ENCODE measurements at regions of chr17 and their contacts with region 1.

Region 1: GRCh38 chr17:34024806-34025551 is 230.1 kb upstream of the CCL2 start:
- DNase-seq: no peak
- ATAC-seq: peak in 1 of 2 donors; percentile 30
- H3K4me3 ChIP-seq: no peak overlapping the region
- H3K27ac ChIP-seq: no peak overlapping the region
- H3K4me1 ChIP-seq: no peaks in the 10 kb centered on the region
- H3K27me3 ChIP-seq: no peaks in the 10 kb centered on the region
- CTCF ChIP-seq: no peak
- POLR2A ChIP-seq: no peak

Region 2: GRCh38 chr17:33905338-33905800 is 119.6 kb before region 1 on chr17:
- in situ Hi-C with region 1: no loop called
- intact Hi-C with region 1: no loop called
- DNase-seq: no peak
- ATAC-seq: no peak
- H3K4me3 ChIP-seq: no peak overlapping the region
- H3K27ac ChIP-seq: no peak overlapping the region
- H3K4me1 ChIP-seq: no peaks in the 10 kb centered on the region
- H3K27me3 ChIP-seq: no peaks in the 10 kb centered on the region
- CTCF ChIP-seq: no peak
- POLR2A ChIP-seq: no peak

Region 3: GRCh38 chr17:34110315-34110714 is 85.3 kb after region 1 on chr17:
- in situ Hi-C with region 1: loop called in 1 of 4 experiments (anchors 25 kb)
- intact Hi-C with region 1: no loop called
- DNase-seq: no peak
- ATAC-seq: no peak
- H3K4me3 ChIP-seq: no peak overlapping the region
- H3K27ac ChIP-seq: no peak overlapping the region
- H3K4me1 ChIP-seq: no peaks in the 10 kb centered on the region
- H3K27me3 ChIP-seq: peaks cover 0 to 9% (median 0%) of the 10 kb centered on the region in 3 donors
- CTCF ChIP-seq: no peak
- POLR2A ChIP-seq: no peak

Region 4: GRCh38 chr17:34269969-34270368 is 245.0 kb after region 1 on chr17 and contains the start of gene CCL7:
- in situ Hi-C with region 1: no loop called
- intact Hi-C with region 1: no loop called
- DNase-seq: no peak
- ATAC-seq: no peak
- H3K4me3 ChIP-seq: no peak within 1 kb of the TSS
- H3K27ac ChIP-seq: no peak within 1 kb of the TSS
- H3K4me1 ChIP-seq: no peaks in the 10 kb centered on the region
- H3K27me3 ChIP-seq: no peaks in the 10 kb centered on the region
- CTCF ChIP-seq: no peak
- POLR2A ChIP-seq: no peak
- total RNA-seq, gene CCL7: not detected

Region 5: GRCh38 chr17:34930283-34930682 is 905.3 kb after region 1 on chr17:
- in situ Hi-C with region 1: no loop called
- intact Hi-C with region 1: no loop called
- DNase-seq: no peak
- ATAC-seq: no peak
- H3K4me3 ChIP-seq: no peak overlapping the region
- H3K27ac ChIP-seq: no peak overlapping the region
- H3K4me1 ChIP-seq: no peaks in the 10 kb centered on the region
- H3K27me3 ChIP-seq: no peaks in the 10 kb centered on the region
- CTCF ChIP-seq: no peak
- POLR2A ChIP-seq: no peak

Measured in gastrocnemius medialis (tissue), 4 donors.